Naive thymus-derived CD4-positive, alpha-beta T cell (primary cell): ENCODE measurements at regions of chr4 and their contacts with region 1.

Region 1: GRCh38 chr4:78517050-78517652 is 34.4 kb upstream of the ANXA3 start:
- DNase-seq: no peak
- ATAC-seq: no peak
- H3K4me3 ChIP-seq: no peak overlapping the region
- H3K4me3 Mint-ChIP-seq: no peak overlapping the region
- H3K27ac ChIP-seq: no peak overlapping the region
- H3K27ac Mint-ChIP-seq: no peak overlapping the region
- H3K4me1 ChIP-seq: no peaks in the 10 kb centered on the region
- H3K4me1 Mint-ChIP-seq: no peaks in the 10 kb centered on the region
- H3K27me3 ChIP-seq: no peaks in the 10 kb centered on the region
- H3K27me3 Mint-ChIP-seq: peaks cover 0 to 29% (median 6%) of the 10 kb centered on the region in 5 donors

Region 2: GRCh38 chr4:76969941-76970529 is 1547.1 kb before region 1 on chr4:
- CTCF ChIA-PET with region 1: no interaction called
- POLR2A ChIA-PET with region 1: no interaction called
- intact Hi-C with region 1: no loop called
- DNase-seq: no peak
- ATAC-seq: no peak
- H3K4me3 ChIP-seq: no peak overlapping the region
- H3K4me3 Mint-ChIP-seq: no peak overlapping the region
- H3K27ac ChIP-seq: no peak overlapping the region
- H3K27ac Mint-ChIP-seq: peak overlapping the region in 1 of 9 donors; percentile 43
- H3K4me1 ChIP-seq: no peaks in the 10 kb centered on the region
- H3K4me1 Mint-ChIP-seq: peaks cover 0 to 11% (median 10%) of the 10 kb centered on the region in 7 donors
- H3K27me3 ChIP-seq: no peaks in the 10 kb centered on the region
- H3K27me3 Mint-ChIP-seq: peaks cover 0 to 20% (median 0%) of the 10 kb centered on the region in 5 donors

Region 3: GRCh38 chr4:77385124-77385969 is 1131.8 kb before region 1 on chr4:
- CTCF ChIA-PET with region 1: no interaction called
- POLR2A ChIA-PET with region 1: no interaction called
- intact Hi-C with region 1: loop called in 1 of 2 experiments (anchors 5 kb)
- DNase-seq: peak in 7 of 9 donors; percentile 19 to 51 (median 39)
- ATAC-seq: peak; percentile 72
- H3K4me3 ChIP-seq: no peak overlapping the region
- H3K4me3 Mint-ChIP-seq: no peak overlapping the region
- H3K27ac ChIP-seq: no peak overlapping the region
- H3K27ac Mint-ChIP-seq: no peak overlapping the region
- H3K4me1 ChIP-seq: no peaks in the 10 kb centered on the region
- H3K4me1 Mint-ChIP-seq: peaks cover 0 to 8% (median 0%) of the 10 kb centered on the region in 7 donors
- H3K27me3 ChIP-seq: no peaks in the 10 kb centered on the region
- H3K27me3 Mint-ChIP-seq: peaks cover 0 to 8% (median 0%) of the 10 kb centered on the region in 5 donors

Region 4: GRCh38 chr4:77959566-77960338 is 557.4 kb before region 1 on chr4:
- CTCF ChIA-PET with region 1: no interaction called
- POLR2A ChIA-PET with region 1: no interaction called
- intact Hi-C with region 1: loop called (anchors 2 kb)
- DNase-seq: peak in 5 of 9 donors; percentile 10 to 40 (median 24)
- ATAC-seq: no peak
- H3K4me3 ChIP-seq: no peak overlapping the region
- H3K4me3 Mint-ChIP-seq: no peak overlapping the region
- H3K27ac ChIP-seq: no peak overlapping the region
- H3K27ac Mint-ChIP-seq: no peak overlapping the region
- H3K4me1 ChIP-seq: no peaks in the 10 kb centered on the region
- H3K4me1 Mint-ChIP-seq: peaks cover 0 to 8% (median 6%) of the 10 kb centered on the region in 7 donors
- H3K27me3 ChIP-seq: no peaks in the 10 kb centered on the region
- H3K27me3 Mint-ChIP-seq: peaks cover 0 to 3% (median 0%) of the 10 kb centered on the region in 5 donors

Region 5: GRCh38 chr4:78056265-78057129 is 460.7 kb before region 1 on chr4:
- CTCF ChIA-PET with region 1: no interaction called
- POLR2A ChIA-PET with region 1: no interaction called
- intact Hi-C with region 1: loop called in 1 of 2 experiments (anchors 5 kb)
- DNase-seq: peak in 5 of 9 donors; percentile 10 to 30 (median 17)
- ATAC-seq: peak; percentile 51
- H3K4me3 ChIP-seq: peak overlapping the region; percentile 57
- H3K4me3 Mint-ChIP-seq: peak overlapping the region; percentile 84 to 96 (median 86)
- H3K27ac ChIP-seq: no peak overlapping the region
- H3K27ac Mint-ChIP-seq: peak overlapping the region in 1 of 9 donors; percentile 16
- H3K4me1 ChIP-seq: peaks cover 10 to 14% of the 10 kb centered on the region in 2 donors
- H3K4me1 Mint-ChIP-seq: peaks cover 24 to 33% (median 26%) of the 10 kb centered on the region in 7 donors
- H3K27me3 ChIP-seq: peaks cover 3 to 18% of the 10 kb centered on the region in 2 donors
- H3K27me3 Mint-ChIP-seq: peaks cover 66 to 78% (median 69%) of the 10 kb centered on the region in 5 donors

Region 6: GRCh38 chr4:78481180-78481579 is 36.0 kb before region 1 on chr4:
- CTCF ChIA-PET with region 1: no interaction called
- POLR2A ChIA-PET with region 1: no interaction called
- intact Hi-C with region 1: no loop called
- DNase-seq: no peak
- ATAC-seq: no peak
- H3K4me3 ChIP-seq: no peak overlapping the region
- H3K4me3 Mint-ChIP-seq: no peak overlapping the region
- H3K27ac ChIP-seq: no peak overlapping the region
- H3K27ac Mint-ChIP-seq: no peak overlapping the region
- H3K4me1 ChIP-seq: no peaks in the 10 kb centered on the region
- H3K4me1 Mint-ChIP-seq: no peaks in the 10 kb centered on the region
- H3K27me3 ChIP-seq: no peaks in the 10 kb centered on the region
- H3K27me3 Mint-ChIP-seq: peaks cover 0 to 13% (median 0%) of the 10 kb centered on the region in 5 donors